Posterior vena cava (tissue), 2 donors: ENCODE measurements at regions of chr13 and their contacts with region 1.

Region 1: DNA sequence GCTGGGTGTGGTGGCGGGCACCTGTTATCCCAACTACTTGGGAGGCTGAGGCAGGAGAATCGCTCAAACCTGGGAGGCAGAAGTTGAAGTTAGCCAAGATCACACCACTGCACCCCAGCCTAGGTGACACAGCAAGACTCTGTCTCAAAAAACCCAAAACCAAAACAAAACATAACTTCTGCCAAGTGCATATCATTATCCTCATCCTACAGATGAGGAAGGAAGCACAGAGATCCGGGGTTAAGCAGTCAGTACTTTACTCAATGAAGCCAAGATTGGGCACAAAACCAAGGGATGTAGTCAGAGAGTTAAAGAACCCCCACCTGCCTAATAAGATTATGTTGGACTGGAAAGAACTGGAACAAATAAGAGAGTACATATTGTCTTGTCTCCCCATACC is 5.5 kb upstream of the TMTC4 start:
- DNase-seq: no peak

Region 2: GRCh38 chr13:100818711-100819110 is 138.6 kb after region 1 on chr13:
- intact Hi-C with region 1: loop called in 1 of 2 experiments (anchors 5 kb)
- DNase-seq: no peak

Region 3: GRCh38 chr13:100954430-100955305 is 274.5 kb after region 1 on chr13:
- intact Hi-C with region 1: no loop called
- DNase-seq: no peak